Activated T-helper 1 cell treated with anti-CD3 and anti-CD28 coated beads, Interleukin-12 subunit alpha, Interleukin-12 subunit beta, Interleukin-2, Interleukin-4 antibody, amounts not matched to agents 30 ng/mL and 10 ng/mL and 1 ng/mL, durations not matched to agents 14 hours and 24 hours and 36 hours (primary cell): ENCODE measurements at regions of chr2 and their contacts with region 1.

Region 1: GRCh38 chr2:120012771-120013596 is at the start of gene EPB41L5:
- DNase-seq: peak; percentile 75
- H3K4me3 Mint-ChIP-seq: peak within 1 kb of the TSS; percentile 78
- H3K27ac Mint-ChIP-seq: no peak within 1 kb of the TSS
- H3K4me1 Mint-ChIP-seq: peaks cover 7% of the 10 kb centered on the region
- H3K27me3 Mint-ChIP-seq: peaks cover 11% of the 10 kb centered on the region
- total RNA-seq, gene EPB41L5: 1.2 TPM in 2 replicates

Region 2: GRCh38 chr2:119366649-119367471 is 646.1 kb before region 1 on chr2 and contains the starts of genes C2orf76 and DBI:
- intact Hi-C with region 1: loop called (anchors 5 kb)
- DNase-seq: peak; percentile 93
- H3K4me3 Mint-ChIP-seq: peak within 1 kb of the TSS; percentile 99
- H3K27ac Mint-ChIP-seq: peak within 1 kb of the TSS; percentile 99
- H3K4me1 Mint-ChIP-seq: peaks cover 46% of the 10 kb centered on the region
- H3K27me3 Mint-ChIP-seq: no peaks in the 10 kb centered on the region
- total RNA-seq, gene C2orf76: 10.3 and 10.7 TPM in 2 replicates
- total RNA-seq, gene DBI: 142 and 146 TPM in 2 replicates

Region 3: GRCh38 chr2:119702918-119703401 is 310.0 kb before region 1 on chr2:
- intact Hi-C with region 1: loop called (anchors 5 kb)
- DNase-seq: peak; percentile 56
- H3K4me3 Mint-ChIP-seq: no peak overlapping the region
- H3K27ac Mint-ChIP-seq: no peak overlapping the region
- H3K4me1 Mint-ChIP-seq: peaks cover 3% of the 10 kb centered on the region
- H3K27me3 Mint-ChIP-seq: peaks cover 2% of the 10 kb centered on the region

Region 4: GRCh38 chr2:119929537-119929936 is 83.4 kb before region 1 on chr2:
- intact Hi-C with region 1: loop called (anchors 5 kb)
- DNase-seq: peak; percentile 34
- H3K4me3 Mint-ChIP-seq: peak overlapping the region; percentile 72
- H3K27ac Mint-ChIP-seq: peak overlapping the region; percentile 88
- H3K4me1 Mint-ChIP-seq: peaks cover 60% of the 10 kb centered on the region
- H3K27me3 Mint-ChIP-seq: no peaks in the 10 kb centered on the region

Region 5: GRCh38 chr2:120252225-120253021 is 239.4 kb after region 1 on chr2 and contains the start of gene RALB:
- intact Hi-C with region 1: loop called (anchors 1 kb)
- DNase-seq: peak; percentile 99
- H3K4me3 Mint-ChIP-seq: peak within 1 kb of the TSS; percentile 98
- H3K27ac Mint-ChIP-seq: peak within 1 kb of the TSS; percentile 95
- H3K4me1 Mint-ChIP-seq: peaks cover 85% of the 10 kb centered on the region
- H3K27me3 Mint-ChIP-seq: peaks cover 10% of the 10 kb centered on the region
- total RNA-seq, gene RALB: 79.7 and 84.2 TPM in 2 replicates

Region 6: DNA sequence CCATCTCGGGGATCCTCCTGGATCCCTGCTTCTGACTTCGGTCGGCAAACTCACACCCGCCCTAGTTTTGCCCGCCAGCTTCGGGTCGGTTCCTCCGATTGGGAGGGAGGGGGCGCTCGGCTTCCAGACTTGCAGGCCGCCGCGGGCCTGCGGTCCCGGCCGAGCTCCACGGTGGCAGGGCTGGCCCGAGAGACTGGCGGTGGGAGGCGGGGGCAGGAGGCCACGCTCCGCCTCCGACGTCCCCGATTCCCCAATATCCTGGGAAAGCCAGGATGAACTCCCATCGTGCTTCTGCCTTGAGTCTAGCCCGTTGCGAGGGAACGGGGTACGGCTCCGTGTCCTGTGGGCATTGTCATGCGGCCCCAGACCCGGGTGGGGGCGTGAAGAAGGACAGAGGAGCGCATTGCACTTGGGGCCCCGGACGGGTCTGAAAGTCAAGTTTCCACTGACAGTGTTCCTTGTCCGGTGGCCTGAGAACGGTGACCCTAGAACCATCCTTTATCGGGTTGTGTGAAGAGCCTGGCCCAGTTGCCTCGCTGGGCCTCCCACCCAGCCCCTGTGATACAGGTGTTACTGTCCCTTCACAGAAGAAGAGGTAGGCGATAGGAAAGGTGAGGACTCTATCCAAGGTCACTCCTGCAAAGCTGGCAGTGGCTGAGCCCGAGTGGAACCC is 330.6 kb after region 1 on chr2:
- intact Hi-C with region 1: loop called (anchors 10 kb)
- DNase-seq: peak; percentile 40
- H3K4me3 Mint-ChIP-seq: peak overlapping the region; percentile 33
- H3K27ac Mint-ChIP-seq: no peak overlapping the region
- H3K4me1 Mint-ChIP-seq: peaks cover 13% of the 10 kb centered on the region
- H3K27me3 Mint-ChIP-seq: peaks cover 61% of the 10 kb centered on the region